ENCODE measurements at regions of chr15 and their contacts with region 1.

Region 1: GRCh38 chr15:43824302-43825246 is at the start of gene MFAP1:
- DNase-seq: peak; percentile 96
- H3K4me3 Mint-ChIP-seq: peak within 1 kb of the TSS; percentile 99
- H3K27ac Mint-ChIP-seq: peak within 1 kb of the TSS; percentile 97
- H3K4me1 Mint-ChIP-seq: peaks cover 56% of the 10 kb centered on the region
- H3K27me3 Mint-ChIP-seq: no peaks in the 10 kb centered on the region
- total RNA-seq, gene MFAP1: 37.2 to 38.0 TPM

Region 2: GRCh38 chr15:43776718-43777583 is 47.6 kb before region 1 on chr15 and contains the start of gene ELL3:
- CTCF ChIA-PET with region 1: no interaction called
- POLR2A ChIA-PET with region 1: interaction called, 9 read pairs
- intact Hi-C with region 1: loop called (anchors 1 kb)
- DNase-seq: peak; percentile 93
- H3K4me3 Mint-ChIP-seq: peak within 1 kb of the TSS; percentile 85
- H3K27ac Mint-ChIP-seq: peak within 1 kb of the TSS; percentile 84
- H3K4me1 Mint-ChIP-seq: peaks cover 24% of the 10 kb centered on the region
- H3K27me3 Mint-ChIP-seq: no peaks in the 10 kb centered on the region
- total RNA-seq, gene ELL3: 2.4 to 2.9 TPM

Region 3: GRCh38 chr15:43791993-43792760 is 32.4 kb before region 1 on chr15 and contains the start of gene SERF2:
- CTCF ChIA-PET with region 1: interaction called, 3 read pairs
- POLR2A ChIA-PET with region 1: interaction called, 13 read pairs
- intact Hi-C with region 1: loop called (anchors 1 kb)
- DNase-seq: peak; percentile 100
- H3K4me3 Mint-ChIP-seq: peak within 1 kb of the TSS; percentile 95
- H3K27ac Mint-ChIP-seq: peak within 1 kb of the TSS; percentile 96
- H3K4me1 Mint-ChIP-seq: peaks cover 38% of the 10 kb centered on the region
- H3K27me3 Mint-ChIP-seq: no peaks in the 10 kb centered on the region
- total RNA-seq, gene SERF2: 787 to 817 TPM

Region 4: DNA sequence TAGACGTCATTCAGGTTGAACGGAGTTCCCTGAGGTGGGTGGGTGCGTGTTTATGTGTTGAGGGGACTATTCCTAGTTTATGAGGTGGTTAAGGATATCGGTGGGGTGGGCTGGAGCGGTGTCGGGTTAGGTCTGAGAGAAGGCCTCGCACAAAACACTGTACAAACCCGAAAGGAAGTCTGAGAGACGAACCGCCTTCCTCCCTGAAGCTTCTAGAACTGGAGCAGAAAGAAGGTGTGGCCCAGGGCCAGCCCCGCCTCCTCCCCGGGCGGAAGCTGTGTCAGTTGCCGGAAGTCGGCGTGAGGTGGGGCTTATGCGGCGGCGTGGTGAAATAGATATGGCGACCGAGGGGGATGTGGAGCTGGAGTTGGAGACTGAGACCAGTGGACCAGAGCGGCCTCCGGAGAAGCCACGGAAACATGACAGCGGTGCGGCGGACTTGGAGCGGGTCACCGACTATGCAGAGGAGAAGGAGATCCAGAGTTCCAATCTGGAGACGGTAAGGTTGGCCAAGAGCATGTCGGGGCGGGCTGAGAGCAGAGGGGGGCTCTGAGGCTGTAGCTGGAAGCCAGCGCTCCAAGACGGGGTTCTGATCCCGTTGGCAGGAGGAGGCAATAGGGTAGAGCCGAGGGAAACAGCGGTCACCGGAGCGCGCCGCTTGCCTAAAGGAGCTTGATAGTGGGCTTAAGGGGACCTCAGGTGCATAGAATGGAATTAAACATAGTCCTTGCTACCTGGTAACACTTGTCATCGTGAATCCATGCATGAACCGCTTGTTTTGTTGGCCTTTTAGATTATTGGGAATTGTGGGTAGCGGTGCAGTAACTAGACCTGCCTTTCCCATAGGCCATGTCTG is 24.1 kb before region 1 on chr15 and contains the start of gene HYPK:
- CTCF ChIA-PET with region 1: interaction called, 3 read pairs
- POLR2A ChIA-PET with region 1: interaction called, 17 read pairs
- intact Hi-C with region 1: loop called (anchors 1 kb)
- DNase-seq: peak; percentile 95
- H3K4me3 Mint-ChIP-seq: peak within 1 kb of the TSS; percentile 99
- H3K27ac Mint-ChIP-seq: peak within 1 kb of the TSS; percentile 87
- H3K4me1 Mint-ChIP-seq: peaks cover 45% of the 10 kb centered on the region
- H3K27me3 Mint-ChIP-seq: no peaks in the 10 kb centered on the region
- total RNA-seq, gene HYPK: 16.7 to 19.1 TPM

Region 5: DNA sequence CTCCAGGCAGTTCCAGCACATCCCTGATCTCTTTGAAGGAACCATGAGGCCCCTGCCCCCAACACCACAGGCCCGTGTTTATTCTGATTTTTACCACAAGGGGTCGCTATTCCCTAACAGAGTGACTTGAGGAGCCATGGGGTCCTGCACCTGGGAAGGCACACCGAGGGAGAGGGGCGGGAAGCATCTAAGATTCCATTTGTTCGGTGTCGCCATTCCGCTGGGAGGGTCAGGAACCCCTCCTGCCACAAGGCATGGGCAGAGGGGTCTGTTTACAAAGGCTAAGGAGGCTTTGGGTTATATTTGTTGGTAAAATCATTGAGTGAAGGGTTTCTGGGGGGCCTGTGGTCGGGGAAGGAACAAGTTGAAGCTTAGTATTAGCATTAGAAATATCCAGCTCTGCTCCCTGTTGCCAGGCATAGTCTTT is 79.3 kb after region 1 on chr15:
- CTCF ChIA-PET with region 1: no interaction called
- POLR2A ChIA-PET with region 1: no interaction called
- intact Hi-C with region 1: no loop called
- DNase-seq: peak; percentile 59
- H3K4me3 Mint-ChIP-seq: no peak overlapping the region
- H3K27ac Mint-ChIP-seq: no peak overlapping the region
- H3K4me1 Mint-ChIP-seq: peaks cover 2% of the 10 kb centered on the region
- H3K27me3 Mint-ChIP-seq: no peaks in the 10 kb centered on the region

Region 6: DNA sequence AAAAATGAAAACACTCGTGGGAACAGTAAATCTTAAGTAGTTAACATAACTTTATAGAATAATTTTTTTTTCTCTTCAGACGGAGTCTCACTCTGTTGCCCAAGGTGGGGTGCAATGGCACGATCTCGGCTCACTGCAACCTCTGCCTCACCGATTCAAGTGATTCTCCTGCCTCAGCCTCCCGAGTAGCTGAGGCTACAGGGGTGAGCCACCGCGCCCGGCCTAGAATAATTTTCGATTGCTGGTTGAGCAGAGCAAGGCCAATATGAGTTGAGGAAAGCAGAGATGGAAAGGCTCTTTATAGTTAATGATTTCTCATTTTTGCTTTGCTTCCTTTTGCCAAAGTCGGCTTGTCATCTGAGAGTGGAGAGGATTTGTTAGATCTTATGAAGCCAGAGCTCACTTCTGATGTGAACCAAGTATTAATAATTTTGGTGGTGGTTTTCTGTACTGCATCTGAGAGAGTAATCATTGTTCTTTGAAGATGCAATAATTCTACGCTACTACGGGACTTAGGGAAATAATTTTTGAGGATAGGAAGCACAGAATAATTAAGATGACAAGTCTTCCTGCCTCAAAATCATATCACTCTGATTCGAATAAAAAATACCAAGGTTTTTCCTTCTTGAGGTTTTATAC is 462.4 kb after region 1 on chr15:
- CTCF ChIA-PET with region 1: no interaction called
- POLR2A ChIA-PET with region 1: interaction called, 3 read pairs
- intact Hi-C with region 1: loop called (anchors 10 kb)
- DNase-seq: no peak
- H3K4me3 Mint-ChIP-seq: peak overlapping the region; percentile 86
- H3K27ac Mint-ChIP-seq: peak overlapping the region; percentile 50
- H3K4me1 Mint-ChIP-seq: peaks cover 36% of the 10 kb centered on the region
- H3K27me3 Mint-ChIP-seq: peaks cover 3% of the 10 kb centered on the region

Region 7: GRCh38 chr15:44536962-44537734 is 712.6 kb after region 1 on chr15 and contains the start of gene EIF3J:
- CTCF ChIA-PET with region 1: no interaction called
- POLR2A ChIA-PET with region 1: no interaction called
- intact Hi-C with region 1: loop called (anchors 10 kb)
- DNase-seq: peak; percentile 96
- H3K4me3 Mint-ChIP-seq: peak within 1 kb of the TSS; percentile 84
- H3K27ac Mint-ChIP-seq: peak within 1 kb of the TSS; percentile 94
- H3K4me1 Mint-ChIP-seq: peaks cover 43% of the 10 kb centered on the region
- H3K27me3 Mint-ChIP-seq: no peaks in the 10 kb centered on the region
- total RNA-seq, gene EIF3J: 92.6 to 95.2 TPM